H1 (cell line): ENCODE measurements at regions of chr3 and their contacts with region 1.

Region 1: GRCh38 chr3:139588450-139588849 is 48.9 kb upstream of the RBP1 start:
- DNase-seq: peak in 1 of 2 experiments; percentile 83
- H3K4me3 ChIP-seq: no peak overlapping the region
- H3K27ac ChIP-seq: no peak overlapping the region
- H3K4me1 ChIP-seq: no peaks in the 10 kb centered on the region
- H3K27me3 ChIP-seq: no peaks in the 10 kb centered on the region
- CTCF ChIP-seq: peak; percentile 67 to 81 (median 74)
- EP300 ChIP-seq: no peak
- POLR2A ChIP-seq: no peak
- RAD21 ChIP-seq: peak; percentile 84 to 90

Region 2: GRCh38 chr3:139601191-139601961 is 12.9 kb after region 1 on chr3:
- CTCF ChIA-PET with region 1: interaction called, 21 read pairs
- POLR2A ChIA-PET with region 1: interaction called, 3 read pairs
- DNase-seq: no peak
- H3K4me3 ChIP-seq: no peak overlapping the region
- H3K27ac ChIP-seq: no peak overlapping the region
- H3K4me1 ChIP-seq: no peaks in the 10 kb centered on the region
- H3K27me3 ChIP-seq: no peaks in the 10 kb centered on the region
- CTCF ChIP-seq: no peak
- EP300 ChIP-seq: no peak
- POLR2A ChIP-seq: no peak
- RAD21 ChIP-seq: no peak

Region 3: DNA sequence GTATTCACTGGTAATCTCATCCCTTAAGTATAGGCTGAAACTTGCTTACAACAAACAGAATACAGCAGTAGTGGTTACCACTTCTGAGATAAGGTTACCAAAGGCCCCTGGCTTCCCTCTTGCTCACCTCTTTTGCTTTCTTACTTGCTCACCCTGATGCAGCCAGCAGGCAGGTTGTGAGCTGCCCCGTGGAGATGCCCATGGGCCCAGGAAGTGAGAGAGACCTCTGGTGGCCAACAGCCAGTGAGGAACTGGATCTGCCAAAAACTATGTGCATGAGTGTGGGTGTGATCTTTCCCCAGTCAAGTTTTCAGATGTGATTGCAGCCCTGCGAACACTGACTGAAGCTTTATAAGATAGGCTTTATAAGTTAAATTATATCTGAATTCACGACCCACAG is 40.6 kb after region 1 on chr3:
- CTCF ChIA-PET with region 1: interaction called, 18 read pairs
- POLR2A ChIA-PET with region 1: no interaction called
- DNase-seq: no peak
- H3K4me3 ChIP-seq: no peak overlapping the region
- H3K27ac ChIP-seq: no peak overlapping the region
- H3K4me1 ChIP-seq: peaks cover 0 to 4% (median 2%) of the 10 kb centered on the region in 4 experiments; a peak in 3 of 7 replicates
- H3K27me3 ChIP-seq: no peaks in the 10 kb centered on the region
- CTCF ChIP-seq: peak; percentile 61 to 78 (median 72)
- EP300 ChIP-seq: no peak
- POLR2A ChIP-seq: no peak
- RAD21 ChIP-seq: peak; percentile 53 to 68; a peak in 3 of 4 replicates